Common myeloid progenitor, CD34-positive (primary cell): ENCODE measurements at regions of chr14 and their contacts with region 1.

Region 1: DNA sequence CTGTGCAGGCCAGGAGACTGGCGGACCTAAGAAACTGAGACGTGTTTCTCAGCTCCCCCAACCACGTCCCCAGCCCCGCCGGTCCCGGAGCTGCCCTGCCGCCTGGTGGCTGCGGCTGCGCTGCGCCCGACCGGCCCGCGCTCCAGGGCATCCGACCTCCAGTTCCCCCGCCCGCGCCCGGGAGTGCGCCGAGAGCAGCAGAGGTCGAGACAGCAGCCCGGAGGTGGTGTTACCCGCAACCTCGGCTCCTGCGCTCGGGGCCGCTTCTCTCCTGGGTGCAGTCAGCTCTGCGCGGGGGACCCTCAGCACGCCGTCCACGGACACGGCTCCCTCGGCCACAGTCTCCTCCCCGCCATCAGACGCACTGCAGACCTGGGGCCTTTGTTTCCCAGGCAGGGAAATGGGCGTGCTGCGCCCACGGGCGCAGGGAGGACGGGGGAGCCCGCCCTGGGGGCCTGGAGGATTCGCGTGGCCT is 21.6 kb upstream of the GPR132 start:
- DNase-seq: peak; percentile 76 to 84 (median 83)
- H3K4me3 ChIP-seq: peak overlapping the region in 4 of 7 experiments; percentile 33 to 63 (median 50)
- H3K27ac ChIP-seq: no peak overlapping the region
- H3K4me1 ChIP-seq: peaks cover 0 to 23% (median 15%) of the 10 kb centered on the region in 4 experiments
- H3K27me3 ChIP-seq: peaks cover 0 to 29% (median 19%) of the 10 kb centered on the region in 5 experiments

Region 2: DNA sequence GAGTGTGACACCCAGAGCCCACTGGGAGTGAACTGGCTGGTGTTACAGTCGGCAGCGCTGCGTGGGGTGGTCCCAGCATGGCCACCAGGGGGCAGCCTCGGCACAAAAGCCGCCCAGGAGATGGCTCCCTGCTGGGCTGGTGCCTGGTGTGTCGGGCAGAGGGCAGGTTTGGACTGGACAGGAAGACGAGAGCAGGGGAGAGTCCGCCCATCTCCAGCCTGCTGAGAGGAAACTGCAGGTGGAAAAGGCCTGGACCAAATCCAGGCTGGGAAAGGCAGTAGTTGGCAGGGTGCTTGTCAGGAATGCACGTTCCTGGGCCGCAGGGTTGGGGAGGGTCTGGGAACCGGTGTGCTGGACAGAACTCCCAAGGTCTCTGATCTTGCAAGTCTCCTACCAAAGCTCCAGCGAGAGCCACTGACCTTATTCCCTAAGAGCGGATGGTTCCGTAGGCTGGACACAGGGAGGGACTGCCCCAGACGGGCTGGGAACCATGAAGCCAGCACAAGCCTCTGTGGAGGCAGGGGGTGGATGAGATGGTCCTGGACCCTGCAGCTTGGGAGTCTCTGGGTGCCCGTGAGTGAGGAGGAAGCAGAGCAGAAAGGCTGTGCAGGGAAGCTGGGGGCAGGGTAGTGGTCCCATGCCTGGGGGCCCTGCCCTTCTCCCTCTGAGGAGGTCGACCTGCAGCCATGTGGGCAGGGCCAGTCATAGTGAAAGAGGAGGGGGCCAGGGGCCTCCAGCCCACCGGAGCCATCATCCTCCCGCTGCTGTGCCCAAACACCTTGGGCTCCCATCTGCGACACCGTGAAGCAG is 110.5 kb before region 1 on chr14:
- CTCF ChIA-PET with region 1: interaction called, 19 read pairs
- POLR2A ChIA-PET with region 1: no interaction called
- DNase-seq: peak; percentile 70 to 84 (median 79)
- H3K4me3 ChIP-seq: no peak overlapping the region
- H3K27ac ChIP-seq: no peak overlapping the region
- H3K4me1 ChIP-seq: peaks cover 0 to 16% (median 13%) of the 10 kb centered on the region in 4 experiments
- H3K27me3 ChIP-seq: peaks cover 0 to 28% (median 18%) of the 10 kb centered on the region in 5 experiments

Region 3: GRCh38 chr14:105065280-105066228 is 21.3 kb before region 1 on chr14 and contains the start of gene GPR132:
- CTCF ChIA-PET with region 1: interaction called, 187 read pairs
- POLR2A ChIA-PET with region 1: interaction called, 9 read pairs
- DNase-seq: peak; percentile 95 to 99 (median 99)
- H3K4me3 ChIP-seq: peak within 1 kb of the TSS; percentile 24 to 69 (median 38)
- H3K27ac ChIP-seq: peak within 1 kb of the TSS; percentile 33 to 78
- H3K4me1 ChIP-seq: peaks cover 12 to 90% (median 84%) of the 10 kb centered on the region in 4 experiments
- H3K27me3 ChIP-seq: no peaks in the 10 kb centered on the region

Region 4: GRCh38 chr14:105075379-105076295 is 11.2 kb before region 1 on chr14:
- CTCF ChIA-PET with region 1: interaction called, 86 read pairs
- POLR2A ChIA-PET with region 1: interaction called, 7 read pairs
- DNase-seq: peak; percentile 83 to 96 (median 96)
- H3K4me3 ChIP-seq: peak overlapping the region in 6 of 7 experiments; percentile 26 to 61 (median 40)
- H3K27ac ChIP-seq: peak overlapping the region in 1 of 2 experiments; percentile 33
- H3K4me1 ChIP-seq: peaks cover 3 to 41% (median 34%) of the 10 kb centered on the region in 4 experiments
- H3K27me3 ChIP-seq: no peaks in the 10 kb centered on the region

Region 5: DNA sequence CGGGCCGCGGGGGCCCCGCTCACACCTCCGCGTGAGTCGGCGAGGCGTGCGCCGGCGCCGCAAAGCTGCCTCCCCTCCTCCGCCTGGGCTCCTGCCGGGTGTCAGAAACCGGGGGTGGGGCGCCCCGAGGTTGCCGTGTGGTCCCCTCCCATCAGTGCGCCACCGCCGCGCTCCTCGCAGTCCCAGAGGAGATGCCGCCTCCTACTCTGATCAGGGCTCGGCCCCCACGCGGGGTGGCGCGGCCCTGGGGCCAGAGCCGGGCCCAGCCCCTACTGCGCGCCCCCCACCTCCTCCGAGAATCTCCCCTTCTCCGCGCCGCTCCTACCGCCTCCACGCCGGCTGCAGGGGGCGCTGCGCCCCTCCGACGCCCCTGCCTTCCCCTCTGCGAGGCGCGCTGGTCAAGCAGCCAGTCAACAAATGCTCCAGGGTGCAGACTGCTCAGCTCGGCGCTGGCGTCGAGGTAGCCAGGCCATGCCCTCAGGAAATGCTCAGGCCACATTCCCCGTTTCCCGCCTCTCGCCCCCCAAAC is 82.2 kb after region 1 on chr14:
- CTCF ChIA-PET with region 1: interaction called, 21 read pairs
- POLR2A ChIA-PET with region 1: no interaction called
- DNase-seq: peak; percentile 27 to 46 (median 36)
- H3K4me3 ChIP-seq: peak overlapping the region in 3 of 7 experiments; percentile 15 to 52 (median 50)
- H3K27ac ChIP-seq: no peak overlapping the region
- H3K4me1 ChIP-seq: peaks cover 0 to 44% (median 36%) of the 10 kb centered on the region in 4 experiments
- H3K27me3 ChIP-seq: peaks cover 0 to 56% (median 31%) of the 10 kb centered on the region in 5 experiments